SK-N-SH (cell line): ENCODE measurements at regions of chr7 and their contacts with region 1.

Region 1: DNA sequence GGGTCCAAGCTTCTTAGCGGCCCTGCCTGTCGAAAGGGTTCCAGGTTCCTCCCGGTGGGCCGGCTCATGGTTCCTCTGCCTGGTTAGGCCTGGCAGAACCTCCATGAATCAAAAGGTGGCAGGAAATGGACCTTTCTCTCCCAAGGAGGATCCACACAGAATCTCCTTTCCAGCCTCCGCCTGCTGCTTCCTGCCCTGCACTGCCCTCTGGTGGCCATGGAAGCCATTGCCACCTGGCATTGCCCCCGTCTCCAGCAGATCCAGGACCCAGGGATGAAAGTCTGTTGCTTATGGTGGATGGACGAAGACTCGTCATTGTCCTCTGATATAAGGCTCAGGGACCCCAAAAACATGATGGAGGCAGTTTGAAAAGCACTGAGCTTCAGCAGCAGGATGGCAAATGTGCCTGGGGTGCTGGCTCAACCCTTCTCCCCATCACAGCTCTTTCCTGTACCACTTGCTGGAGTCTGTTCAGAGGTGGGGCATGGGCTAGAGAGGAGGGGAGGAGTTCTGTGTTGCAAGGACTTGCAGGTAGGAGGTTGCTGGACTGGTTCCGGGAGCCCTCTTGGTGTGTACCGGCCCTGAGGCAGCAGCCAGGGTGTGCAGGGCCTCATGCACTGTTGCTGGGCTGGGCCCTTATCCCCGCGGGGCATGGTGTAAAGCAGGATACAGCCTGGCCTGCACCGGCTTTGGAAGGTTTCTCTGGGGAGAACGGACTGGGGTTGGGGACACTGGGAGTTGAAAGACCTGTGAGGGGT is 11.3 kb upstream of the INMT start:
- DNase-seq: peak; percentile 96
- H3K4me3 ChIP-seq: no peak overlapping the region; a peak in 1 of 4 replicates
- H3K27ac ChIP-seq: no peak overlapping the region
- H3K4me1 ChIP-seq: peaks cover 0 to 3% of the 10 kb centered on the region in 2 experiments; a peak in 1 of 4 replicates
- H3K27me3 ChIP-seq: peaks cover 35% of the 10 kb centered on the region; the same call in 1 of the 2 replicates
- CTCF ChIP-seq: peak; percentile 100
- EP300 ChIP-seq: no peak
- RAD21 ChIP-seq: peak; percentile 99

Region 2: DNA sequence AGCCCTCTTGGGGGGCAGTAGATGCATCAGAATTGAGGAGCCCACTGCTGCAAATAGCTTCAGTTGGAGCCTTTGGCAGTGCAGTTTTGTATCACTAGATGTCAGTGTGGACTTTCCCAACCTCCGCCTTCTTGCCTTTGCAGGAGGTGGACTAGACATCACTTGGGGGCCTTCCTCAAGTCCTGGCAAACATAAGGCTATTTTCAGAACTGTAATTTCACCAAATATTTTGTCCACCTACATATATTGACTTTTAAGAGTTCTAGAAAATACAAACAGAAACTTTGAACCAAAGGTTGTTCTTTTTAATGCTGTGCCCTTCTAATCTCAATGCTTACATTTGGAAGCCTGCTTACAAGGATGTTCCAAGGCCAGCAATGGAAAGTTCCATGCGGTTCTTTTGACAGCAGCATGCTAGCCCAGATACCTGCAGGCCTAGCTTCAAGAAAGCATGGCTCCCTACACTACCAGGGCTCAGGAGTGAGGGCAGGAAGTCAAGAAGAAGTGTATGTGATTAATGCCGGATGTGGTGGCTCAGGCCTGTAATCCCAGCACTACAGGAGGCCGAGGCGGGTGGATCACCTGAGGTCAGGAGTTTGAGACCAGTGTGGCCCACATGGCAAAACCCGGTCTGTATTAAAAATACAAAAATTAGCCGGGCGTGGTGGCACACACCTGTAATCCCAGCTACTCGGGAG is 464.3 kb before region 1 on chr7:
- CTCF ChIA-PET with region 1: interaction called, 11 read pairs
- POLR2A ChIA-PET with region 1: no interaction called
- DNase-seq: peak; percentile 67
- H3K4me3 ChIP-seq: no peak overlapping the region
- H3K27ac ChIP-seq: no peak overlapping the region
- H3K4me1 ChIP-seq: no peaks in the 10 kb centered on the region
- H3K27me3 ChIP-seq: no peaks in the 10 kb centered on the region
- CTCF ChIP-seq: peak; percentile 89
- EP300 ChIP-seq: no peak
- RAD21 ChIP-seq: peak; percentile 98

Region 3: GRCh38 chr7:30604901-30605300 is 135.7 kb before region 1 on chr7:
- CTCF ChIA-PET with region 1: interaction called, 14 read pairs
- POLR2A ChIA-PET with region 1: no interaction called
- DNase-seq: no peak
- H3K4me3 ChIP-seq: no peak overlapping the region
- H3K27ac ChIP-seq: no peak overlapping the region
- H3K4me1 ChIP-seq: peaks cover 0 to 2% of the 10 kb centered on the region in 2 experiments; a peak in 2 of 4 replicates
- H3K27me3 ChIP-seq: no peaks in the 10 kb centered on the region
- CTCF ChIP-seq: no peak
- EP300 ChIP-seq: no peak
- RAD21 ChIP-seq: no peak

Region 4: DNA sequence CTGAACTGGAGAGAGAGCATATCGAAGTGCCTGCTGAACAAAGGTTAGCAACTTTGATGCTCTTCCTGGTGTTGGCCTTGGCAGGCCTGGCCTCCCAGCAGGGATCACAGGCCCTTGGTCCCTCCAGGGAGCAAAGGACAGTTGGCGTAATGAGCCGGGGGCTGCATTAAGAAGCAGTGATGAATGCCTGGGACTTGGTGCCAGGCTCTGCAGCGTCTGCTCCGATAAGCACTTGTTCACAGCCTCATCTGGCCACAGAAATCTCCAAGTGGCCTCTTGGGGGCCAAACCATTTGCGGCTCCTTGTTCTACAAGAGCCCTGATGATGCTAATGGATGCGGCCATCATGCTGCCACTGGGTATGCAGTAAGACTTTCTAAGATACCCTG is 90.2 kb before region 1 on chr7:
- CTCF ChIA-PET with region 1: interaction called, 11 read pairs
- POLR2A ChIA-PET with region 1: no interaction called
- DNase-seq: no peak
- H3K4me3 ChIP-seq: no peak overlapping the region
- H3K27ac ChIP-seq: no peak overlapping the region
- H3K4me1 ChIP-seq: no peaks in the 10 kb centered on the region; a peak in 1 of 4 replicates
- H3K27me3 ChIP-seq: no peaks in the 10 kb centered on the region
- CTCF ChIP-seq: no peak
- EP300 ChIP-seq: no peak
- RAD21 ChIP-seq: no peak

Region 5: DNA sequence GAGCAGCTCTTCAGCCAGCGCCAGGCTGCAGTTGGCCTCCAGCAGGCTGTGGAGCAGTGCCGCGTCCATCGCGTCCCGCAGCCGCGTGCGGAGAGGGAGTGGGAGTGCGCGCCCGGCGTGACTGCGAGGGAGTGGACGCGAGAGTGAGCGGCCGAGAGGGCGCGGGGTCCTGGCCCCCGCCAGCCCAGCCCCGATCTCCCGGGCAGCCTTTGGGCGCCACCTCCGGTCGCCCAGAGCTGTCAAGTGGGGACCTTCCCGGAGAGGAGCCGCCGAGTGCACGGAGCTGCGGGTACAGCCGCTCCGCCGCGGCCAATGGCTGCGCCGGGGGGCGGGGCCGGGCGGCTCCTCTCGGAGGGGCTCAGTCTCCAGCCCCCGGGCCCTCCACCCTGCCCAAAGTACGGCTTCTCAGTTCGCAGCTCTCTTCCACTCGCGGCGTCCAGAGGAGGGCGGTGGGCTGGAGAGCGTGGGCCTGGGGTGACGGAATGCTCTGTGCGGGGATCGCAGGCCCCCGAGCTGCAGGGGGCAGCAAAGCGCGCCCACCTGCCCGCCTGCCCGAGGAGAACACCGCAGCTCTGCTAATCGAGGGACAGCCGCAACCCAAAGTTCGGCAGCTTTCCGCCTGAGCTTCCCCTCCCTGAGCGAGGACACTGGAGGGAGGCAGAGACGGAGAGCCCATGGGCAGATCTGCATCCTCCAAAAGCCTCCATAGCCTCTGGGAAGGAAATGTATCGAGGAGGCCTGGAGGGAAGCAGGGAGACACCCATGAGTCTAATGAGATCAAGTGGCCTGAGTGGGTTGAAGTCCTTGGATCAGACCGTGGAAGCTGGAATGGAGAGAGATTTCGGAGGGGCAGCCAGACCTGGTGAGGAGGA is 58.2 kb before region 1 on chr7 and contains the start of gene CRHR2:
- CTCF ChIA-PET with region 1: interaction called, 67 read pairs
- POLR2A ChIA-PET with region 1: no interaction called
- DNase-seq: peak; percentile 94
- H3K4me3 ChIP-seq: peak within 1 kb of the TSS; percentile 34 to 46; a peak in 3 of 4 replicates
- H3K27ac ChIP-seq: no peak within 1 kb of the TSS
- H3K4me1 ChIP-seq: peaks cover 0 to 27% of the 10 kb centered on the region in 2 experiments; a peak in 1 of 4 replicates
- H3K27me3 ChIP-seq: peaks cover 62% of the 10 kb centered on the region
- CTCF ChIP-seq: peak; percentile 37
- EP300 ChIP-seq: no peak
- RAD21 ChIP-seq: no peak; the same call in 1 of the 2 replicates
- polyA plus RNA-seq, gene CRHR2: not detected in 2 replicates

Region 6: GRCh38 chr7:30717181-30717580 is 23.4 kb before region 1 on chr7:
- CTCF ChIA-PET with region 1: interaction called, 16 read pairs
- POLR2A ChIA-PET with region 1: no interaction called
- DNase-seq: no peak
- H3K4me3 ChIP-seq: no peak overlapping the region
- H3K27ac ChIP-seq: no peak overlapping the region
- H3K4me1 ChIP-seq: no peaks in the 10 kb centered on the region
- H3K27me3 ChIP-seq: no peaks in the 10 kb centered on the region
- CTCF ChIP-seq: no peak
- EP300 ChIP-seq: no peak
- RAD21 ChIP-seq: no peak

Region 7: GRCh38 chr7:30764030-30764975 is 23.7 kb after region 1 on chr7:
- CTCF ChIA-PET with region 1: interaction called, 12 read pairs
- POLR2A ChIA-PET with region 1: no interaction called
- DNase-seq: no peak
- H3K4me3 ChIP-seq: no peak overlapping the region
- H3K27ac ChIP-seq: peak overlapping the region in 1 of 2 experiments; percentile 70; a peak in 1 of 4 replicates
- H3K4me1 ChIP-seq: no peaks in the 10 kb centered on the region; a peak in 1 of 4 replicates
- H3K27me3 ChIP-seq: peaks cover 3% of the 10 kb centered on the region; the same call in 1 of the 2 replicates
- CTCF ChIP-seq: no peak
- EP300 ChIP-seq: no peak
- RAD21 ChIP-seq: no peak

Region 8: DNA sequence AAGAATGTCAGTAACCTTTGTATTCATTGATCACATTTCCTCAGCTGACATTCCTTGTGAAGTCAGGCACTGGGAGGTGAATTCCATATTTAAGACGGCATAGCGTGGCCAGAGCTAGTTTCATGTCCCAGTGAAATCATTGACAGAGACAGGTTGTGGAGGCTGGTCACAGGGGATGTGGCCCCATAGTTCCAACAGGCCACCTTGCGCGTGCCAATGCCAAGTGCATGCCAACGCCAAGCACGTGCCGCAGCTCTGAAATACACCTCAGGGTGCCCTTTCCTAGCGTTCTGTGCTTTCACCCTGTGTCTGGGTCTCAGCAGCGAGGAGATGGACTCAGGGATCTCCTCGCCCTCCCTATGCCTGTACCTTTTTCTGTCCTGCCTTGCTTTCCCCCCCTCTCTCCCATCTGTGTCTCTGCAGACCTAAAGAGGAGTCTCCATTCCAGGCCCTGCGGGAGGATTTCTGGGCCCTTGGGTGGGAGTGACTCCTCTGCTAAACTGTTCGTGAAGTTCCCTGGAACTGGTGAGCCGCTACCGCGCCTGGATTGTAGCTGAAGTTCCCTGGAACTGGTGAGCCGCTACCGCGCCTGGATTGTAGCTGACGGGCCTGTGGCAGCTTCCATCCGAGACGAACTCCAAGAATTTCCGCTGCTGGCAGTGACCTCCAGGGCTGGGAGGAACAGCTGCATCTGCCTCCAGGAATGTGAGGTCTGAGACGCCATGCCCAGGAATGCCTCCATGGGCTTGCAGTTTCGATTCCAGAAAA is 190.7 kb after region 1 on chr7:
- CTCF ChIA-PET with region 1: no interaction called
- POLR2A ChIA-PET with region 1: no interaction called
- DNase-seq: peak; percentile 22
- H3K4me3 ChIP-seq: no peak overlapping the region
- H3K27ac ChIP-seq: peak overlapping the region in 1 of 2 experiments; percentile 1; a peak in 1 of 4 replicates
- H3K4me1 ChIP-seq: peaks cover 0 to 28% of the 10 kb centered on the region in 2 experiments; a peak in 1 of 4 replicates
- H3K27me3 ChIP-seq: no peaks in the 10 kb centered on the region
- CTCF ChIP-seq: no peak
- EP300 ChIP-seq: no peak
- RAD21 ChIP-seq: no peak